ENCODE measurements at regions of chr5 and their contacts with region 1.

Region 1: DNA sequence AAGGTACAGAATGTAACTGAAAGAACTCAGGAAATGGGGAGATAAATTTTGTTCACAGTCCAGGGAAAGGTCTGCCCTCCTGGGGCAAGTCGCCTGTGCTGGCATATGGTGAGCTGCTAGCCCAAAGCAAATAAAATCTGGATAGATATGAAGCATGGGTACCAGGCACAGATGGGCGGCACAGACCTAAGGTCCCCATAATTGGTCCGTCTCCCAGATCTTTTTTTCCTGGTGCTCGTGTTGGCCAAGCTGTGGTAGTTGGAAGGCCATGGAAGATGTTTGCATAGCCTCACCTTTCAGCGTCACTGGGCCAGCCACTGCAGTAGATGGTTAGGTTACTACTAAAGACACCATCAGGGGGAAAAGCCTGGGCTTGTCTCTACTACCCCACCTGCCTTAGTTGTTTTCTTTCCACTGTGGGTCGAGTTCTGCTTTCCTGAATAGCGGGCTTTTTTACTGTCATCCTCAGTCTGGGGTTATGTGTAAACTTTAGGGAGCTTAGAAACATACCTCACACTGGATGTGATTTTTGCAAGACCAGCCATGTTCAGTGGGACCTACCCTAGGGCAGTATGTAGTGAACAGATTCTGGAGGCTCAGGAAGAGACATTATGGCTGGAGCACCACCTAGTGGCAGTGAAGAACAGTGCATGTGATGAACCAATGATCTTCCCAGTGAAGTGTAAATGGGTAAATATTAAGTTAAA is 24.2 kb upstream of the GLRX start:
- DNase-seq: no peak
- ATAC-seq: peak; percentile 65 to 80
- H3K4me3 ChIP-seq: no peak overlapping the region
- H3K27ac ChIP-seq: no peak overlapping the region
- H3K4me1 ChIP-seq: peaks cover 42% of the 10 kb centered on the region
- H3K27me3 ChIP-seq: no peaks in the 10 kb centered on the region
- CTCF ChIP-seq: peak; percentile 94

Region 2: DNA sequence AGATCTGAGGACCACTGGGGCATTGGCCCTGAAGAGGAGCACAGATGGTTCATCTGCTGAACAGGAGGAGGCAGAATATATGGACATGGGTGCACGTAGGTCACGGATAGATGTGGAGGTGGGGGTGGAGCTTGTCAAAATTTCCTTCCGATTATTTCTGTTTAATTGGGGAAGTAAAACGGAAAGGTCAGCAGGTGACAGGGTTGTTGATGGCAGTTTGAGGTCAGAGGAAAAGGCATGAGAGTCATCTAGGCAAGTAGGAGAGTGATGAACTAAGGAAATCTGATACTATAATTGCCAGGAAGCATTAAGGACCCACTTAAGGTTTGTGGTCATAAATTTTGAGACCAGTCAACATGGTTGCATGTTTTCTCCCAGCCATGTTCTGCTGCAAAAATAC is 463.9 kb before region 1 on chr5:
- intact Hi-C with region 1: no loop called
- DNase-seq: no peak
- ATAC-seq: no peak
- H3K4me3 ChIP-seq: no peak overlapping the region
- H3K27ac ChIP-seq: no peak overlapping the region
- H3K4me1 ChIP-seq: no peaks in the 10 kb centered on the region
- H3K27me3 ChIP-seq: no peaks in the 10 kb centered on the region
- CTCF ChIP-seq: no peak

Region 3: GRCh38 chr5:95646554-95647431 is 199.9 kb before region 1 on chr5 and contains the start of gene RFESD:
- intact Hi-C with region 1: loop called (anchors 10 kb)
- DNase-seq: peak; percentile 100
- ATAC-seq: peak; percentile 98 to 99
- H3K4me3 ChIP-seq: peak within 1 kb of the TSS; percentile 55
- H3K27ac ChIP-seq: peak within 1 kb of the TSS; percentile 94
- H3K4me1 ChIP-seq: peaks cover 20% of the 10 kb centered on the region
- H3K27me3 ChIP-seq: no peaks in the 10 kb centered on the region
- CTCF ChIP-seq: peak; percentile 21
- total RNA-seq, gene RFESD: 1.7 TPM

Region 4: DNA sequence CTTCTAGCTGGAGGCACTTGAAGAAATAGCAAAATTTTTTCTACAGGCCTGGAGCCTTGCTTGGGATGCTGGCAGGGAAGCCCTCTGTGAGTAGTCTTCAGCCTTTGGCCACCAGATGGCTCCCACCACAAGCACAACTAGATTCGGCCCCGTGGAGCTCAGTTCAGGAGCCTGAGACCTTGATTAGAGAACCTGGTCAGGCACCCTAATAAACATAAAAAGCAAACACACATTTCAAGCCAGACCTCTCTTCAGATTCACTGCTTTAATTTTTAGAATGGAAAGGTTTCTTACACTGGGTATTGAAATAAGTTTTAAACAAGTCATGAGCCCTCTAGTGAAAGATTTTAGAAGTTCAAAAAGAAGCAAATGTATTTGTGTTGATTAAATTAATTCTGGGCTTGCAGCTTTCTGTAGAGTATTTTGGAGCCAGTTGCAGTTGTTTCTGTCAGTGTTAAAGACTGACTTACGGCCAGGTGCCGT is 65.6 kb before region 1 on chr5:
- intact Hi-C with region 1: loop called (anchors 5 kb)
- DNase-seq: peak; percentile 85
- ATAC-seq: peak; percentile 93 to 97
- H3K4me3 ChIP-seq: no peak overlapping the region
- H3K27ac ChIP-seq: peak overlapping the region; percentile 48
- H3K4me1 ChIP-seq: peaks cover 39% of the 10 kb centered on the region
- H3K27me3 ChIP-seq: no peaks in the 10 kb centered on the region
- CTCF ChIP-seq: peak; percentile 92

Measured in lower lobe of right lung (tissue), 2 donors.